OCI-LY7 (cell line): ENCODE measurements at regions of chr20 and their contacts with region 1.

Region 1: GRCh38 chr20:10034717-10035571 is at the start of gene ANKEF1:
- DNase-seq: peak; percentile 86
- H3K4me3 ChIP-seq: peak within 1 kb of the TSS; percentile 78
- H3K27ac ChIP-seq: no peak within 1 kb of the TSS
- H3K4me1 ChIP-seq: no peaks in the 10 kb centered on the region
- CTCF ChIP-seq: no peak
- total RNA-seq, gene ANKEF1: 1.1 and 2.0 TPM in 2 replicates

Region 2: GRCh38 chr20:9427430-9428291 is 607.3 kb before region 1 on chr20:
- CTCF ChIA-PET with region 1: no interaction called
- POLR2A ChIA-PET with region 1: no interaction called
- intact Hi-C with region 1: no loop called
- DNase-seq: no peak
- H3K4me3 ChIP-seq: no peak overlapping the region
- H3K27ac ChIP-seq: no peak overlapping the region
- H3K4me1 ChIP-seq: no peaks in the 10 kb centered on the region
- CTCF ChIP-seq: no peak

Region 3: GRCh38 chr20:10060226-10060625 is 25.3 kb after region 1 on chr20:
- CTCF ChIA-PET with region 1: no interaction called
- POLR2A ChIA-PET with region 1: interaction called, 3 read pairs
- intact Hi-C with region 1: loop called (anchors 2 kb)
- DNase-seq: peak; percentile 71
- H3K4me3 ChIP-seq: no peak overlapping the region
- H3K27ac ChIP-seq: no peak overlapping the region
- H3K4me1 ChIP-seq: peaks cover 26% of the 10 kb centered on the region
- CTCF ChIP-seq: no peak

Region 4: GRCh38 chr20:10090588-10091166 is 55.7 kb after region 1 on chr20:
- CTCF ChIA-PET with region 1: no interaction called
- POLR2A ChIA-PET with region 1: interaction called, 4 read pairs
- intact Hi-C with region 1: loop called (anchors 2 kb)
- DNase-seq: peak; percentile 49
- H3K4me3 ChIP-seq: no peak overlapping the region
- H3K27ac ChIP-seq: no peak overlapping the region
- H3K4me1 ChIP-seq: no peaks in the 10 kb centered on the region
- CTCF ChIP-seq: peak; percentile 82

Region 5: DNA sequence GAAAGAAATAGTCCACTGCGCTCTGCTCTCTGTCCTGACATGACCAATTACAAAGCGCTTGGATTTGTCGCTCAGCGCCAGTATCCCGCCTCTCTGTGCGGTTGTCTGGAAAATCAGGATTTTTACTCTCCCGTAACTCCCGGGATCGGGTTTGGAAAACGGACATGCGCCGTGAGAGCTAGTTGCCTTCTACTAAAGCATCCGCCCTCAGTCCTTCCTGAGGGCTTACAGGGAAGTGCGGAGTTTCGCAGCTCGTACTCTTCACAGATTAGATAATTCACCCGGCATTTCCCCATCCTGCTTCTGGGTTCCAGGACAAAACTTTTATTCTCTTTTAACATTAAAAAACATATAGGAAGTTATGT is 399.5 kb after region 1 on chr20:
- CTCF ChIA-PET with region 1: no interaction called
- POLR2A ChIA-PET with region 1: no interaction called
- intact Hi-C with region 1: loop called (anchors 10 kb)
- DNase-seq: peak; percentile 90
- H3K4me3 ChIP-seq: peak overlapping the region; percentile 94
- H3K27ac ChIP-seq: peak overlapping the region; percentile 81
- H3K4me1 ChIP-seq: peaks cover 40% of the 10 kb centered on the region
- CTCF ChIP-seq: 0 out of 2 replicates have a peak, but pooled peaks have one; percentile 3